H1 (cell line): ENCODE measurements at regions of chr10 and their contacts with region 1.

Region 1: DNA sequence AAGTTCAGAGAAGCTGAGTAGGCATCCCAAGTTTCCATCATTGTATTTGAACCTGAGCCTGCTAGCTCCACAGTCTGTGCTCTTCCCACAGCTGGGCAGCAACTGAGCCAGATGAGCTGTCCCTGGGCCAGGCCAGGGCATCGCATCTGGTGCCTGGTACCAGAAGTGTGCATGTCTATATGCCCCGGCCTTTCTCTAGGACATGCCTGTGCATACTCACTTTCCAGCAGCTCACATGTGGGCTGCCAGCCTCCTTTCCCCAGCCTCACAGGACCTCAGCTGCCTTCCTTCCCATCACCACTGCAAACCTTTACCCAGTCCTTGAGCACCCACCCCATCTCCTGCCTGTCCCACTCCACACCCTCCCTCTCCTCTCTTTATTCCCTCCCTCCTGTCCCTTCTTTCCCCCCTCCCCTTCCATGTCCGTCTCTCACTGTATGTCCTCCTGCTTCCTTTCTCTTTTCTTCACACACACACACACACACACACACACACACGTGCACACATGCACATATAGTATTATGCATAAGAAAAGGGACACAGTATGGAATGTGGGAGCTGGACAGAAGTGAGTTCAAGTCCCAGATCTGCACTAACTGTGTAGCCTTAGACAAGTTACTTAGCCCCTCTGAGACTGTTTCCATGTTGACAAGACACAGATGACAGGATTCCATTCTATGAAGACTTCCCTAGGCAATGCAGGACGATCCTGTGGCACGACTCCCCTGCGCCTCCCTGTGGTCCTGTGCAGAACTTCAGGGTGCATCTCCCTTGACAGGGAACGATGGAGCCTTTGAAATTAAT is 10.9 kb downstream of the CDHR1 start:
- DNase-seq: peak in 1 of 2 experiments; percentile 89
- H3K4me3 ChIP-seq: no peak overlapping the region
- H3K27ac ChIP-seq: no peak overlapping the region
- H3K4me1 ChIP-seq: no peaks in the 10 kb centered on the region
- H3K27me3 ChIP-seq: no peaks in the 10 kb centered on the region
- CTCF ChIP-seq: peak; percentile 93 to 97 (median 93)
- EP300 ChIP-seq: no peak
- POLR2A ChIP-seq: no peak
- RAD21 ChIP-seq: peak; percentile 86 to 88

Region 2: DNA sequence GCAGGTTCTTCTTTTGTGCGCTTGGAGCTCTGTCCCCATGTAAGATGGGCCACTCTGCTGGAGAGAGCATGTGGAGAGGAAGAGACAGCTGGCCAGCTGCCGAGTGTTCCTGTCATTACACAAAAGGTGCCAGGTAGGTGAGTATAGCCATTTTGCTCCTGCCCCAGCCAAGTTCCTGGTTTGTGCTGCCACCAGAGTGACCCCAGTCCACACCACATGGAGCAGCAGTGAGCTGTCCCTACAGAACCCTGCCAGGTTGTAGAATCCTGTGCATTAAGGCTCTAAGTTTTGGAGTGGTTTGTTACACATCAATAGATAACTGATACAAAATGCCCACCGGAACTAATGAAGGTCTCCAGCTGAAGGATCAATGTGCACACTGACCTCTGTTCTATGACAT is 150.5 kb before region 1 on chr10:
- CTCF ChIA-PET with region 1: interaction called, 12 read pairs
- POLR2A ChIA-PET with region 1: no interaction called
- DNase-seq: no peak
- H3K4me3 ChIP-seq: no peak overlapping the region
- H3K27ac ChIP-seq: no peak overlapping the region
- H3K4me1 ChIP-seq: peaks cover 0 to 4% (median 1%) of the 10 kb centered on the region in 4 experiments; a peak in 1 of 7 replicates
- H3K27me3 ChIP-seq: no peaks in the 10 kb centered on the region
- CTCF ChIP-seq: peak; percentile 41 to 53 (median 50)
- EP300 ChIP-seq: no peak
- POLR2A ChIP-seq: no peak
- RAD21 ChIP-seq: peak; percentile 31 to 35; a peak in 2 of 4 replicates

Region 3: GRCh38 chr10:84139126-84140035 is 65.9 kb before region 1 on chr10 and contains the start of gene GHITM:
- CTCF ChIA-PET with region 1: interaction called, 248 read pairs
- POLR2A ChIA-PET with region 1: interaction called, 3 read pairs
- DNase-seq: peak; percentile 97 to 100
- H3K4me3 ChIP-seq: peak within 1 kb of the TSS; percentile 88 to 97 (median 96)
- H3K27ac ChIP-seq: peak within 1 kb of the TSS; percentile 83
- H3K4me1 ChIP-seq: peaks cover 3 to 9% (median 4%) of the 10 kb centered on the region in 4 experiments; a peak in 6 of 7 replicates
- H3K27me3 ChIP-seq: no peaks in the 10 kb centered on the region
- CTCF ChIP-seq: peak; percentile 9 to 38 (median 37); a peak in 2 of 4 replicates
- EP300 ChIP-seq: no peak
- POLR2A ChIP-seq: peak; percentile 77 to 80
- RAD21 ChIP-seq: no peak
- total RNA-seq, gene GHITM: 87.8 and 97.0 TPM in 2 replicates

Region 4: GRCh38 chr10:84172467-84173356 is 32.5 kb before region 1 on chr10:
- CTCF ChIA-PET with region 1: interaction called, 14 read pairs
- POLR2A ChIA-PET with region 1: no interaction called
- DNase-seq: peak in 1 of 2 experiments; percentile 26
- H3K4me3 ChIP-seq: no peak overlapping the region
- H3K27ac ChIP-seq: no peak overlapping the region
- H3K4me1 ChIP-seq: no peaks in the 10 kb centered on the region; a peak in 1 of 7 replicates
- H3K27me3 ChIP-seq: no peaks in the 10 kb centered on the region
- CTCF ChIP-seq: no peak
- EP300 ChIP-seq: no peak
- POLR2A ChIP-seq: no peak
- RAD21 ChIP-seq: no peak

Region 5: DNA sequence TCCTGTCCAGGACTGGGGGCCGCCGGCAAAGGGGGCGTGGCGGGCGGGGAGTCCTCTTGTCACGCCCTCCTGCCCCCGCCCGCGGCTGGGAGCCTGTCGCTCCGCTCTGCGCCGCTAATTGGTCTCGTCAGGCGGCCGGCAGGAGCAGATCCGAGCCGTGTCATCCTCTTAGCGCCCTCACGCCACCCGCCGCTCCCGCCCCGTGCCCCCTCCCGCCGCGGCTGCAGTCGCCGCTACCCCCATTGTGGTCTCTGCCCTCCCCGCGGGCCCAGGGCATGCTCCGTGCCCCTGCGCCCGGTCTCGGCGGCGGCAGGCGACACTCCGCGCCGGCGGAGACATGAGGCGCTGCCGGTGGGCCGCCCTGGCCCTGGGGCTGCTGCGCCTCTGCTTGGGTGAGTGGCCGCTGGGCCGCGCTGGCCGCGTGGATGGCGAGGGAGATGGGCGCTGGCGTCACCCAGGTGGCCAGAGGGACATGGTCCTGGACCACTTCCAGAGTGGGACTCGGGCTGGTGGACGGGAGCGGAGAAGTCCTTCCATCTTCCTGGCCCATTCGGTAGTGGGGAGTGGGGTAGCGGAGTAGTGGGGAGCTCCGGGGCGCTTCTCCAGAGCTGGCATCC is 10.7 kb before region 1 on chr10 and contains the start of gene CDHR1:
- CTCF ChIA-PET with region 1: interaction called, 64 read pairs
- POLR2A ChIA-PET with region 1: no interaction called
- DNase-seq: peak in 1 of 2 experiments; percentile 77
- H3K4me3 ChIP-seq: peak within 1 kb of the TSS; percentile 55 to 66 (median 63)
- H3K27ac ChIP-seq: no peak within 1 kb of the TSS
- H3K4me1 ChIP-seq: peaks cover 0 to 5% (median 2%) of the 10 kb centered on the region in 4 experiments; a peak in 4 of 7 replicates
- H3K27me3 ChIP-seq: peaks cover 2 to 36% (median 31%) of the 10 kb centered on the region in 4 experiments
- CTCF ChIP-seq: no peak
- EP300 ChIP-seq: no peak
- POLR2A ChIP-seq: no peak
- RAD21 ChIP-seq: no peak
- total RNA-seq, gene CDHR1: 8.7 and 10.5 TPM in 2 replicates